Mammary epithelial cell (primary cell): ENCODE measurements at regions of chr3 and their contacts with region 1.

Region 1: DNA sequence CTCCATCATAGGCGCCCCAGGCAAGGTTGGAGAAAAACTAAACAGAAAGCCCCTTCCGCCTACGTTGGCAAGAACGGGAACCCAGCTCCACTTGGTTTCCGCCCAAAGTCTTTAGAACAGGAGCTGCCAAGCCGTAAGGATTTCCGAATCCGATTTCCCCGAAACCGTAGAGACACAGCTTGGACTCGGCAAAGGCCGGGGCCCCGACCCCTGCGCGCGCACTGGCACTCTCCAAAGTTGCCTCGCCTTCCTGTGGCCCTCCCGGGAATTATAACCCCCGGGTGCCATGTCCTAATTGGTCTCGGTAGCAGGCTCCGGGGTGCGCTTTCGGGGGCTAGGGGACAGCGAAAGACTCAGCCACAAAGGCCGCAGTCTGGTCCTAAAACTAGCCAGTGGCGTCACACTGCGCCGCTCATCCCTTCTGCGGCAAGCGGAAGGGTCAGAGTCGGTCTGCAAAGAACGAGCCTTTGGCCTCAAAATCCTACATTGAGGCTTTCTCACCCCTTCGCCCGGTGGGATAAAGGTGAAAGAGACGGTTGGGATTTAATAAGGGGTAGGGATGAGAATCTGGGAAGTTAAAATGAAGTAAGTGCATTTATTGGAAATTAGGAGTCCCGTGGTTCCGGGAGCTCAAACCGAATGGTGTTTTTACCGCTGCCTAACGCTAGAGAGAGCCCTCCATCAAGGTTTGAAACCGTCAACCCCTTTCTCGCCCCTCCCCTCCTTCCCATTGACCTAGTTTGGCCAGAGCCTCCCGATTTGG is 6.8 kb downstream of the BCL6 start:
- DNase-seq: peak; percentile 84
- H3K4me3 ChIP-seq: peak overlapping the region; percentile 32 to 65 (median 63)
- H3K27ac ChIP-seq: peak overlapping the region; percentile 91
- H3K4me1 ChIP-seq: peaks cover 63% of the 10 kb centered on the region
- H3K27me3 ChIP-seq: no peaks in the 10 kb centered on the region
- CTCF ChIP-seq: peak; percentile 67 to 80

Region 2: DNA sequence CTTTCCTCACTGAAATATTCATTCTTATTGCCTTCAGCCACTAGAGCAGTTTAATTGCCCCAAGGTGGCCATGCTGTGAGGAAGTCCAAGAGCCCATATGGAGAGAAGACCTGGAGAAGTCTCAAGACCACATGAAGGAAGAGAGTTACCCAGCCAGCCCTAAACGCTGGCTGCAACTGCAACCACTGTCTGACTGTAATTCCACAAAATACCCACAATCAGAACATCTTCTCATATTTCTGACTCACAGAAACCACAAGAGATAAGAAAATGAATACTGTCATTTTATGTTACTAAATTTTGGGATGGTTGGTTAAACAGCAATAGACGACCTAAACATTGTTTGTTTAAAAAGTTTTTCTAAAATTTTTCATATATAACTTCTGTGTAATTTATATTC is 53.6 kb before region 1 on chr3:
- CTCF ChIA-PET with region 1: no interaction called
- dilution Hi-C with region 1: no loop called
- in situ Hi-C with region 1: no loop called
- intact Hi-C with region 1: no loop called
- DNase-seq: peak; percentile 14
- H3K4me3 ChIP-seq: no peak overlapping the region
- H3K27ac ChIP-seq: no peak overlapping the region
- H3K4me1 ChIP-seq: peaks cover 2% of the 10 kb centered on the region
- H3K27me3 ChIP-seq: peaks cover 9% of the 10 kb centered on the region
- CTCF ChIP-seq: no peak

Region 3: DNA sequence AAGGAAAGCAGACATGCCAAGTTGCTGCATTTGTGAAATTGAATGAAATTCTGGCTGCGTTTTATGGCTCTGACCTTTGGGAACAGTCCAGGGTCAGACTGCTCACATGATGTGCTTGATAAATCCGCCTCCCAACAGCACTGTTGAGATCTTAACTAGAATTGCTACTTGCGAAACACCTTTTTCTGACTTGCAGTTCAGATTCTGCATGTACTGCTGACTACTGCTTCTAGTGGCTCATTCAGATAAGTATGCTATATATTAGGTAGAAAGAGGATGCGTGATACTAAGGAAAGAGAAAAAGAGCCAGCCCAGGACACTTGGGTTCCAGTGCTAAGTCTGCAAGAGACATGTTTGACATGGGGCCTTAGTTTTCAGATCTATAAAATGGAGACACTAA is 544.8 kb after region 1 on chr3:
- CTCF ChIA-PET with region 1: interaction called, 5 read pairs
- dilution Hi-C with region 1: no loop called
- in situ Hi-C with region 1: no loop called
- intact Hi-C with region 1: loop called (anchors 2 kb)
- DNase-seq: no peak
- H3K4me3 ChIP-seq: no peak overlapping the region
- H3K27ac ChIP-seq: no peak overlapping the region
- H3K4me1 ChIP-seq: peaks cover 37% of the 10 kb centered on the region
- H3K27me3 ChIP-seq: no peaks in the 10 kb centered on the region
- CTCF ChIP-seq: peak in 1 of 2 donors; percentile 32

Region 4: GRCh38 chr3:188411750-188412149 is 673.2 kb after region 1 on chr3:
- CTCF ChIA-PET with region 1: no interaction called
- dilution Hi-C with region 1: no loop called
- in situ Hi-C with region 1: no loop called
- intact Hi-C with region 1: loop called (anchors 5 kb)
- DNase-seq: no peak
- H3K4me3 ChIP-seq: no peak overlapping the region
- H3K27ac ChIP-seq: no peak overlapping the region
- H3K4me1 ChIP-seq: peaks cover 2% of the 10 kb centered on the region
- H3K27me3 ChIP-seq: no peaks in the 10 kb centered on the region
- CTCF ChIP-seq: no peak

Region 5: DNA sequence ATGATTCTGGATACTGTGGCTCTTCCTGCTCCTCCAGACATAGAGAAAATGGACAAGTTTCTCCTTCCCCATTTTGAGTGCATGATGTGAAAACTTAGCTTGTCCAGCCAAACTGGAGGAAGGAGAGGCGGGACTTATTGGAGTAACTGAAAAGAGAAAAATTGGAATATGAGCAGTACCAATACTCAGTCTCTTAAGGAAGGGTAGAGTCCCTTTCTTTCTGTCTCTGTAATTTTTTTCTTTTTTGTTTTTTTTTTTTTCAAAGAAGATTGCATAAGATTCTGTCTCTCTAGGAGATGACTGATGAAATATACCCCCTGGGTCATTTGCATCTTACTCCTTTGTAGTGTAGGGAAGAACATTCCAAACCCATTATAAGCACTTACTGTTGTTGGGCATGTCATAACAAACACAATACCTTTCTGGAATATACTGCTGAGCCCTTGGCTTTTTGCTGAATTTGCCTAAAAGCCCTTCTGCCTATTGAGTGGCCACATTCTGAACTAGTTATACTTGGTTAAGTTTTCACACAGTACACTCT is 935.2 kb after region 1 on chr3:
- CTCF ChIA-PET with region 1: no interaction called
- dilution Hi-C with region 1: no loop called
- in situ Hi-C with region 1: loop called in 1 of 2 experiments (anchors 25 kb)
- intact Hi-C with region 1: loop called (anchors 5 kb)
- DNase-seq: peak; percentile 93
- H3K4me3 ChIP-seq: no peak overlapping the region
- H3K27ac ChIP-seq: peak overlapping the region; percentile 97
- H3K4me1 ChIP-seq: peaks cover 35% of the 10 kb centered on the region
- H3K27me3 ChIP-seq: no peaks in the 10 kb centered on the region
- CTCF ChIP-seq: no peak

Region 6: DNA sequence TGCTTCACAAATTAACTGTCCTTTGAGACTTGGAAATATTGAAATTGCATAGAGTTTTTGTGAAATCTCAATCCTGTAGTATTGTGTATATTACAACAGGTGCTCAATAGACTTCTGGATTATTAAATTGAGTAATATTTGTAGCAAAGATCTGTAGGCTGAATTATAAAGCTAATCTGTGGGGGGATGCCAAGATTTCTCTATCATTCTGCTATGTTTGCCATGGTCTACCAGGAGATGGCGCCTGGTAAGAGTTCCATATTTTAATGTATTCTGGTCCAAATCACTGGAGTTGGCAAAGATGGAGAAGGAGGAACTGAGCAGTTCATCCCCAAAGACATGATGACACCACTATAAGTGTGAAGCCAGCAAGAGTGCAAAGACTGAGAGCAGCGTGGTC is 1092.4 kb after region 1 on chr3:
- CTCF ChIA-PET with region 1: no interaction called
- dilution Hi-C with region 1: no loop called
- in situ Hi-C with region 1: loop called (anchors 25 kb)
- intact Hi-C with region 1: loop called (anchors 2 kb)
- DNase-seq: no peak
- H3K4me3 ChIP-seq: no peak overlapping the region
- H3K27ac ChIP-seq: no peak overlapping the region
- H3K4me1 ChIP-seq: peaks cover 14% of the 10 kb centered on the region
- H3K27me3 ChIP-seq: no peaks in the 10 kb centered on the region
- CTCF ChIP-seq: peak; percentile 36 to 43

Region 7: GRCh38 chr3:189041482-189042090 is 1303.1 kb after region 1 on chr3:
- CTCF ChIA-PET with region 1: interaction called, 3 read pairs
- dilution Hi-C with region 1: no loop called
- in situ Hi-C with region 1: no loop called
- intact Hi-C with region 1: loop called (anchors 1 kb)
- DNase-seq: peak; percentile 73
- H3K4me3 ChIP-seq: no peak overlapping the region
- H3K27ac ChIP-seq: no peak overlapping the region
- H3K4me1 ChIP-seq: no peaks in the 10 kb centered on the region
- H3K27me3 ChIP-seq: no peaks in the 10 kb centered on the region
- CTCF ChIP-seq: peak; percentile 64 to 70